ENCODE measurements at regions of chr12 and their contacts with region 1.

Region 1: DNA sequence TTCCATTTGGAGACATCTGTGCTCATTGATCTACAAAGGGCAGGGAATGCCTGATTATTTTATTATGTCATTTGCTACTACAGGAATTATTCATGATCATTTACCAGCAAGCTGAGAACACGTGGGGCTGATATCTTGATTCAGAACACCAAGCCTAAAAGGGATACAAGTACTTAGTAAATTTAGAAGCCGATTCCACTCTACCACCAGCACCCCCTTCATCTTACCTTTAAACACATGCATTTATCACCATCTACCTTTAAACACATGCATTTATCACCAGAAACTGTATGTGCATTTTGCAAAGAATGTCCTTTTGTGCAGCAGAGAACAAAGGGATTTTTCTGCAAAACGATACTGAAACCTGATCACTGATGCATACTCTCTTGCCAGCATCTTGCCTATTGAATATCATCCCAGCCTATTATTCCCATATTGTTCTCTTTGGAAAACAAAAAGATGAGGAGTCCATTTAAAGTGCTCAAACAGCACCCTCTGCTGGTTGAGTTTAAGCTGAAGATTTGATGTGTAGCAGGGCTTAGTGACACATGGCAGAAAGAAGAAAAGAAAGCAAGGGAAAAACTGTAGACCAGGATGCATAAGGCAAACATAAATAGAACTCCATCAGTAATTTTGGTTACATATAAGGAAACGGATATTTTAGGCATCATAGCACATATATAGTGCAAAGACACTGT is 132.6 kb upstream of the PLEKHG7 start:
- DNase-seq: peak; percentile 48 to 71
- H3K4me3 ChIP-seq: no peak overlapping the region
- H3K4me3 Mint-ChIP-seq: no peak overlapping the region
- H3K27ac Mint-ChIP-seq: no peak overlapping the region
- H3K4me1 ChIP-seq: peaks cover 12% of the 10 kb centered on the region
- H3K4me1 Mint-ChIP-seq: peaks cover 7% of the 10 kb centered on the region
- H3K27me3 ChIP-seq: no peaks in the 10 kb centered on the region
- H3K27me3 Mint-ChIP-seq: no peaks in the 10 kb centered on the region
- CTCF ChIP-seq: peak; percentile 54 to 64

Region 2: DNA sequence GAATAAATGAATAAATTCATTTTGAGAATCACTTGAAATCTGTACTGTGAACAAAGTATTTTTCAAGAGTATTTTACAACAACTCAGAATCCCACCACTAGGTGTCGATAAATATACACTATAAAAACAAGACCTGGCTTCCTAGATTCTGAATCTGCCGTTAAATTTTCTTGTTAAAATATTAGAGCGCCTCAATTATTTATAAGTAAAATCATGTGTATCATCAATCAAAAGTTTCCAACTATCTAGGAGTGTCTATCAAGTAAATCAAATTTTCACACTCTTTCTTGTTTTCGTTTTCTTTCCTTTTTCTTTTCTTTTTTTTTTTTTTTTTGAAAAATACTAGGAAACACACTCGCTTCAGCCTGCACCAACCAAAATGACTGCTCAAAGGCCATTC is 1208.3 kb before region 1 on chr12:
- CTCF ChIA-PET with region 1: no interaction called
- POLR2A ChIA-PET with region 1: no interaction called
- intact Hi-C with region 1: loop called (anchors 5 kb)
- DNase-seq: peak in 1 of 2 experiments; percentile 12
- H3K4me3 ChIP-seq: no peak overlapping the region
- H3K4me3 Mint-ChIP-seq: no peak overlapping the region
- H3K27ac Mint-ChIP-seq: no peak overlapping the region
- H3K4me1 ChIP-seq: peaks cover 13% of the 10 kb centered on the region
- H3K4me1 Mint-ChIP-seq: peaks cover 8% of the 10 kb centered on the region
- H3K27me3 ChIP-seq: no peaks in the 10 kb centered on the region
- H3K27me3 Mint-ChIP-seq: peaks cover 3% of the 10 kb centered on the region
- CTCF ChIP-seq: peak; percentile 37 to 42

Region 3: DNA sequence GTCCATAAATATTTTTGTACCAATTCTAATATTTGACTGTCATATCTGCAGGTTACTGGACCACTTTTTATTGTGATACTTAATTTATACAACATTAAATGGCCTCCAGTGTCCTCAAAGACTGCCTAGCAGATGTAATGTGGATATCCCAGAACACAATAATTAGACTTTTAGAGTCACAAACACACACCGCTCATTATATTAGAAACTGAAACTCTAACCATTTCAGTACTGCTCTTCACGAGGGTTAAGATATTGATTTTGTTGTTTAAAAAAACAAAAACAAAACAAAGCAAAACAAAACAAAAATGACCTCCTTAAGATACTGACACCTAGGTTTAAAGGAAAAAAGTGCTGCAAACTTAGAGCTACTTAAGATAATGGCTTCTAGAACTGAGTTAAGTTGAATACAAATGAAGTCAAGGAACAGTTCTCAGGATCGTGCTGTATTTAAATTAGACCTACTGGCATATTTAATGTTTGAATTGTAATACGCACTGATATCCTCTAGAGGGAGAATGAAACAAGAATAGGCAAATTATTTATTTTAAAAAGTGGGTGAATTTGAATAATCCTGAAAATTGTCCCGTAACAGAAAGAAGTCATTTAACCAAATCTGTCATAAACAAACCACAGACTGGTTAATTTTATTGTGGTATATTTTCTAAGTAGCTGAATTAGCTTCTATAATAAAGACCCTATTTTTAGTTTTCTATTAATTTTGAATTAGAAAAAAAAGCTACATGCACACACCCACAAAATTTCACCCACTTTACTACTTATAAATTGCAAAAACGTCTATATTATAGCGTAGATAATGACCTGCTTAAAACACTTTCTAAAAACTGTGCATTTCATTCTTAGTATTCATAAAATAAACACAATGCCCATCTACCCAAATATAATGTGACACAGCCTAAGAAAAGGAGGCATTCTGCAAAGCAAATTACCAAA is 992.3 kb before region 1 on chr12:
- CTCF ChIA-PET with region 1: no interaction called
- POLR2A ChIA-PET with region 1: no interaction called
- intact Hi-C with region 1: loop called (anchors 10 kb)
- DNase-seq: no peak
- H3K4me3 ChIP-seq: no peak overlapping the region
- H3K4me3 Mint-ChIP-seq: no peak overlapping the region
- H3K27ac Mint-ChIP-seq: no peak overlapping the region
- H3K4me1 ChIP-seq: no peaks in the 10 kb centered on the region
- H3K4me1 Mint-ChIP-seq: no peaks in the 10 kb centered on the region
- H3K27me3 ChIP-seq: no peaks in the 10 kb centered on the region
- H3K27me3 Mint-ChIP-seq: no peaks in the 10 kb centered on the region
- CTCF ChIP-seq: peak; percentile 39 to 75

Region 4: GRCh38 chr12:92338671-92339070 is 231.5 kb before region 1 on chr12:
- CTCF ChIA-PET with region 1: no interaction called
- POLR2A ChIA-PET with region 1: no interaction called
- intact Hi-C with region 1: loop called (anchors 10 kb)
- DNase-seq: no peak
- H3K4me3 ChIP-seq: no peak overlapping the region
- H3K4me3 Mint-ChIP-seq: no peak overlapping the region
- H3K27ac Mint-ChIP-seq: no peak overlapping the region
- H3K4me1 ChIP-seq: no peaks in the 10 kb centered on the region
- H3K4me1 Mint-ChIP-seq: peaks cover 6% of the 10 kb centered on the region
- H3K27me3 ChIP-seq: no peaks in the 10 kb centered on the region
- H3K27me3 Mint-ChIP-seq: peaks cover 2% of the 10 kb centered on the region
- CTCF ChIP-seq: no peak

Region 5: GRCh38 chr12:92431146-92431545 is 139.1 kb before region 1 on chr12:
- CTCF ChIA-PET with region 1: no interaction called
- POLR2A ChIA-PET with region 1: no interaction called
- intact Hi-C with region 1: loop called (anchors 1 kb)
- DNase-seq: peak in 1 of 2 experiments; percentile 7
- H3K4me3 ChIP-seq: no peak overlapping the region
- H3K4me3 Mint-ChIP-seq: no peak overlapping the region
- H3K27ac Mint-ChIP-seq: no peak overlapping the region
- H3K4me1 ChIP-seq: no peaks in the 10 kb centered on the region
- H3K4me1 Mint-ChIP-seq: no peaks in the 10 kb centered on the region
- H3K27me3 ChIP-seq: no peaks in the 10 kb centered on the region
- H3K27me3 Mint-ChIP-seq: peaks cover 7% of the 10 kb centered on the region
- CTCF ChIP-seq: peak in 1 of 2 experiments; percentile 4

Region 6: DNA sequence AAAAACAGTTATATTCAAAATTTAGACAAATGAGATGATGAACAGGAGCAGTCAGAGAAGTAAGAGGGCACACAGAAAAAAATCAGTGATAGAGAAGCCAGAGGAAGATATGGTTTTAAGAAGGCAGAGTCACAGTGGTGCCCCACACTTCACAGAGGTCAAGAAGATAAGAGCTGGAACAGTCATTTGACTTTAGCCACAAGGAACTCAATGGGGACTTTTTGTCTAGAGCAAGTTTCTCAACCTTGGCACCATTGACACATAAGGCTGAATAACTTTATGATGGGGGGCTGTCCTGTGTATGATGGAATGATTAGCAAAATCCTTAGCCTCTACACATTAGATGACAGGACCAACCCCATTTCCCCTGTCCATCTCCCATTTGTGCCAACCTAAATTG is 40.3 kb before region 1 on chr12:
- CTCF ChIA-PET with region 1: no interaction called
- POLR2A ChIA-PET with region 1: no interaction called
- intact Hi-C with region 1: no loop called
- DNase-seq: no peak
- H3K4me3 ChIP-seq: no peak overlapping the region
- H3K4me3 Mint-ChIP-seq: no peak overlapping the region
- H3K27ac Mint-ChIP-seq: no peak overlapping the region
- H3K4me1 ChIP-seq: no peaks in the 10 kb centered on the region
- H3K4me1 Mint-ChIP-seq: no peaks in the 10 kb centered on the region
- H3K27me3 ChIP-seq: no peaks in the 10 kb centered on the region; the same call in 1 of the 2 replicates
- H3K27me3 Mint-ChIP-seq: no peaks in the 10 kb centered on the region
- CTCF ChIP-seq: no peak

Region 7: DNA sequence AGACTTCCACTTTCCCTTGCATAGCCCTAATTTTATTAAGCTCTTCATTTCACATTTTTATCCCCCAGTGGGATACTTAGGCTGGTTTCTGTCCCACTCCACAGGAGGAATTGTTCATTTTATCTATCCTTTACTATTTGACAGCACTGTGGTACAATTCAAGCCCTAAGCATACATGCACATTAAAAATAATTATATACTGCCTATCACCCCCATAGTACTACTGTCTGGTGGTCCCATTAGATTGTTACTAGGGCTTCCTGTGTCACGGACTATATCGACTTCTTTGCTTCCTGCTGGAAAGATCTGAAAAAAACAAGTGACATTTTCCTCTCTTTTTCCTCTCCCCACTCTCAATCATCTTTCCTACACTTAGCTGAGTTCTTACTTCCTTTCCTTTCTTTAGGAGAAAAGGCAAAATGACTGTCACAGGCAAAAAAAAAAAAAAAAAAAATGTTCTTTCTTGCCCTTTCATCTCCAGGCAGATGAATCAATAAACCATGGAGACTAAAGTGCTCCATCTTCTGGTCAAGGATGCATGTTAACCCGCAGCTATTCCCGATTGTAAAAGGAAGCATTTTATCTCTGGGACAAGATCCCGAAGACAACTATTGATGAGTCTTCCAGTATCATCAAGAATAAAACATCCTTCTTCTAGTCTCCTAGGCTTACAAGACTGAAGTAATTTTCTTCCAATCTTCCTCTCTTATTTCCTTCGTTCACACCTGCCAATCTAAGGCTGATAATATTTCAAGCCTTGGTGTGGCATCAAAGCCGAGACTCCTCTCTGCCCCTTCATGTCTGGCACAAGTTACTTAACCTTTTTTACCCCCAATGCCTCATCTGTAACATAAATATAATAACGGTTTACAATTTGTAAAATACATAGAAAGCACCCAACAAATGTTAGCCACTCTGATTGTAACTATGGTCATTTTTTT is 38.2 kb after region 1 on chr12:
- CTCF ChIA-PET with region 1: interaction called, 3 read pairs
- POLR2A ChIA-PET with region 1: no interaction called
- intact Hi-C with region 1: loop called (anchors 1 kb)
- DNase-seq: peak; percentile 34 to 46
- H3K4me3 ChIP-seq: no peak overlapping the region
- H3K4me3 Mint-ChIP-seq: no peak overlapping the region
- H3K27ac Mint-ChIP-seq: no peak overlapping the region
- H3K4me1 ChIP-seq: peaks cover 2% of the 10 kb centered on the region
- H3K4me1 Mint-ChIP-seq: no peaks in the 10 kb centered on the region
- H3K27me3 ChIP-seq: no peaks in the 10 kb centered on the region
- H3K27me3 Mint-ChIP-seq: no peaks in the 10 kb centered on the region
- CTCF ChIP-seq: peak; percentile 39 to 70

Region 8: GRCh38 chr12:92629349-92630065 is 59.3 kb after region 1 on chr12:
- CTCF ChIA-PET with region 1: no interaction called
- POLR2A ChIA-PET with region 1: no interaction called
- intact Hi-C with region 1: no loop called
- DNase-seq: no peak
- H3K4me3 ChIP-seq: no peak overlapping the region
- H3K4me3 Mint-ChIP-seq: no peak overlapping the region
- H3K27ac Mint-ChIP-seq: no peak overlapping the region
- H3K4me1 ChIP-seq: no peaks in the 10 kb centered on the region
- H3K4me1 Mint-ChIP-seq: no peaks in the 10 kb centered on the region
- H3K27me3 ChIP-seq: no peaks in the 10 kb centered on the region
- H3K27me3 Mint-ChIP-seq: peaks cover 12% of the 10 kb centered on the region
- CTCF ChIP-seq: no peak

Region 9: DNA sequence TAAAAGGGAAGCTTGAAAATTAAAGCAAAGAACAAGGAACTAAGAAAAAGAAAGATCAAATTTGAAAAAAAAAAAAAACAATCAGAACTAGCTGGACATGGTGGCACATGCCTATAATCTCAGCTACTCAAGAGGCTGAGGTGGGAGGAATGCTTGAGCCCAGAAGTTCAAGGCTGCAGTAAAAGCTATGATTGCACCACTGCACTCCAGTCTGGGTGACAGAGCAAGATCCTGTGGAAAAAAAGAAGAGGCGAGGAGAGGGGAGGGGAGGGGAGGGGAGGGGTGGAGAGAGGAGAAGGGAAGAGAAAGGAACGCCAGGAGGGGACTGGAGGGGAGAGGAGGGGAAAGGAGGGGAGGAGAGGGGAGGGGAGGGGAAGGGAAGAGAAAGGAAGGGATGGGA is 315.9 kb after region 1 on chr12:
- CTCF ChIA-PET with region 1: no interaction called
- POLR2A ChIA-PET with region 1: no interaction called
- intact Hi-C with region 1: no loop called
- DNase-seq: no peak
- H3K4me3 ChIP-seq: no peak overlapping the region
- H3K4me3 Mint-ChIP-seq: no peak overlapping the region
- H3K27ac Mint-ChIP-seq: no peak overlapping the region
- H3K4me1 ChIP-seq: no peaks in the 10 kb centered on the region
- H3K4me1 Mint-ChIP-seq: peaks cover 12% of the 10 kb centered on the region
- H3K27me3 ChIP-seq: no peaks in the 10 kb centered on the region
- H3K27me3 Mint-ChIP-seq: no peaks in the 10 kb centered on the region
- CTCF ChIP-seq: no peak

Region 10: DNA sequence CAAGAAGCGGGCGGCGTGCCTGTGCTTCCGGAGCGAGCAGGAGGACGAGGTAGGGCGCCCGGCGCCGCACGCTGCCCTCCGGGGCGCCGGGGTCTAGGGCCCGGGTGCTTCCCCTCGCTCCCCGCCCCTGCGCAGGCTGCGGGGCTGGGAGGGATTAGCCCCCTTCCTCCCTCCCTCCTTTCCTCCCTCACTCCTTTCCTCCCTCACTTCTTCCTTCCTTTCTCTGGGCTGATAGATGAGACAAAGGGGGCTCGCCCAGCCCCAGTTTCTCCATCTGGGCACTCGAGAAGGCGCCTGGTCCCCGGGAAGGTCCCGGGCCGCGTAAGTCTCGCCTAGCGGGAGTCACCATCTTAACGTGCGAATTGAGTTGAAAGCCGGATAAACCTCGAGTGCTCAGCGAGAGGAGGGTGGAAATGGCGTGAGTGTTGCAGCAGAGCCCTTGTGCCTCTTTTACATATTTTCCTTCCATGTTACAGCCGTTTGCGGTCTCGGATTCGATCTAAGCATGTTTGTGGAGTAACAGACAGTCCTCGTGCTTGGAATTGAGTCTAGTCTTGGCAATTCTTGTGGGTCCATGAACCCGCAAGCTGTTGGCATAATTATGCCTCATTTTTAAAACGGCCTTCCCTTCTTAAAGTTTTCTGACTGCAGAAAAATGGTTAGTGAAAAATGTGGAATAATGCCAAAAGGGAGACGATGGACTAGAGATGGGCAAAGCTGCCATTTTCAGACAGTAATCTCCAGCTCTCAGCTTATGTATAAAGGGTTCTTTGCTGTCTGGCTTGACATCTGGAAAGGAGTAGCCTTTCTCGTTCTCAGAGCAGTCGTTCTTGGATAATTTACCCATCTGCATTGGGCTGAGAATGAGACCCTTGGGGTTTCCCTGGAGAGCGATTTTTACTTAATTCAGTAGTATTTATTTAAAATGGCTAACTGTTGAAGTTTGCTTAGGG is 808.4 kb after region 1 on chr12:
- CTCF ChIA-PET with region 1: no interaction called
- POLR2A ChIA-PET with region 1: no interaction called
- intact Hi-C with region 1: no loop called
- DNase-seq: peak in 1 of 2 experiments; percentile 26
- H3K4me3 ChIP-seq: peak overlapping the region; percentile 83
- H3K4me3 Mint-ChIP-seq: peak overlapping the region; percentile 80
- H3K27ac Mint-ChIP-seq: peak overlapping the region; percentile 90
- H3K4me1 ChIP-seq: peaks cover 36% of the 10 kb centered on the region
- H3K4me1 Mint-ChIP-seq: peaks cover 25% of the 10 kb centered on the region
- H3K27me3 ChIP-seq: no peaks in the 10 kb centered on the region
- H3K27me3 Mint-ChIP-seq: no peaks in the 10 kb centered on the region
- CTCF ChIP-seq: no peak